ENCODE measurements at regions of chr17 and their contacts with region 1.

Region 1: DNA sequence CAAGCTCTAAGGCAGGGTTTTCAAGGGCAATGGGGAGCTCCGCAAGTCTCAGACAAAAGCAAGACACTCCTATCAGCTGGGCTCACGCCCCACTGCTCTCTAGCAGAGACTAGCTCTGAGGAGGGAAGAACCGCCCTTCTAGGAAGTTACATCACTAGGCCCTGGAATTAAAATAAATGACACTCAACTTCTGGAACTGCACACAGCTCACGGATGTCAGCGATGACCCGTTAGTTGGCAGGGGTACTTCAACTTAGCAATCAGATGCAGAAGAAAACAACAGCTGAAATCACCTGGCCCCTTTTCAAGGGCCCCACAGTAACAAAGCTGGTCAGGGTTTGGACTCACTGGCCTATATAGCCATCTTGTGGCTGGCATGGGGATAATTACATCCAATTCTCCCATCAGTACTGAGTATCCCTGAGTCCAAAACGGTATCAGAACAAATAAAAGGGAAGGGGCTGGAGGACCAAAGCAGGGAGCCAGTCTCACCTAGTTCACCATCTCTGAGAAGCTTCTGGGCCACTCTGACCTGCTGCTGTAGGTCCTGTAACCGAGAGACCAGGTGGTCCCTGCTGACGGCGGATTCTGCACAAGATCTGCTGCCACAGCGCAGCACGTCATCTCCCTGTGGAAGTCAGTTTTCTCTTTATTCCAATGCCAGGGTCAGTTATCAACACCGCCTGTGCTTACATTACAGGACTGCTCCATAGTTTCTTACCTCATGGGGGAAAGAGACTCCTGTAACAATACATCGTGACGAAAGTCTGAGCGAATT is 22.2 kb downstream of the SERPINF1 start:
- H3K4me3 Mint-ChIP-seq: peak overlapping the region; percentile 70
- H3K27ac Mint-ChIP-seq: peak overlapping the region; percentile 98
- H3K4me1 Mint-ChIP-seq: peaks cover 50% of the 10 kb centered on the region
- H3K27me3 Mint-ChIP-seq: no peaks in the 10 kb centered on the region

Region 2: DNA sequence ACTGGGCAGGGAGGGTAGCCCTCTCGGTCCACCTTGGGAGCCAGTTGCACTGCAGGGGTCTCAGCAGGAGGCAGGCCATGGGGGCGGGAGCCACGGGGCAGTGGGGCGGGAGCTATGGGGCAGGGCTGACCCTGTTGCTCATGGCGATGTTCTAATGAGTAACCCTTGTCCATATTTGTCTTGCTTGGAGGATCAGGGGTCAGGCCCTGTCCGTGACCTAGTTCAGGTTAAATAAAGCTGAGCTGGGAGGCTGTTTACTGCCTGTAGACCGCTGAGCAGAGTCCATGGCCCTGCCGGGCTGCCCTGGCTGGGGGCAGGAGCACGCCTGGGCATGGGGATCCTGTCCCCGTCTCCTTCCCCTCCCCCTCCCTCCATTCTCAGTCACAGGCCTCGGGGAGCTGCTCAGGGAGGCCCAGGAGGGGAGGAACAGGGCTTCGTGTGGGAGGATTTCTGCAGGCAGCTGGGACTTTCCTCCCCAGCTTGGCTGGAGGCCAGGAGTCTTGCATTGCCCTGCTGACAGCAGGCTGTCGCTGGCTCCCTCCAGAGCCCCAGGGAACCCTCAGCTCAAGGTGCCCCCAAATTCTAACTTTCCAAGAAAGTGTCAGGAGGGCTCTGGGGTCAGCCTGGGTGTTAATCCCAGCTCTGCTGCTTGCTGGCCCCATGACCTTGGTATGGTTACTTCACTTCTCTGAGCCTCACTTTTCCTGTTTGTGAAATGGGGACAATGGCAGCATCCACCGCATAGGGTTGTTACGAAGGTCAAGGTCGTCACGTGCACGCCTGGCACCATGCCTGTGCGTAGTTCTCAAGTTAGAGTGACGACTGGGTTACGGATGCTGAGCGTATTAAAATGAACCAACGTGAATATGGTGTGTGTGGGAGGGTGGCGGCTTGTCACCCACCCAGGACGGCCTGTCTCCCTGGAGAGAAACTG is 47.4 kb before region 1 on chr17:
- intact Hi-C with region 1: loop called (anchors 5 kb)
- H3K4me3 Mint-ChIP-seq: peak overlapping the region; percentile 51
- H3K27ac Mint-ChIP-seq: peak overlapping the region; percentile 92
- H3K4me1 Mint-ChIP-seq: peaks cover 68% of the 10 kb centered on the region
- H3K27me3 Mint-ChIP-seq: no peaks in the 10 kb centered on the region

Region 3: GRCh38 chr17:1829592-1830257 is 45.7 kb after region 1 on chr17 and contains the starts of genes RPA1 and SMYD4:
- intact Hi-C with region 1: loop called (anchors 5 kb)
- H3K4me3 Mint-ChIP-seq: peak within 1 kb of the TSS; percentile 89
- H3K27ac Mint-ChIP-seq: peak within 1 kb of the TSS; percentile 73
- H3K4me1 Mint-ChIP-seq: peaks cover 46% of the 10 kb centered on the region
- H3K27me3 Mint-ChIP-seq: no peaks in the 10 kb centered on the region